ENCODE measurements at regions of chr9 and their contacts with region 1.

Region 1: DNA sequence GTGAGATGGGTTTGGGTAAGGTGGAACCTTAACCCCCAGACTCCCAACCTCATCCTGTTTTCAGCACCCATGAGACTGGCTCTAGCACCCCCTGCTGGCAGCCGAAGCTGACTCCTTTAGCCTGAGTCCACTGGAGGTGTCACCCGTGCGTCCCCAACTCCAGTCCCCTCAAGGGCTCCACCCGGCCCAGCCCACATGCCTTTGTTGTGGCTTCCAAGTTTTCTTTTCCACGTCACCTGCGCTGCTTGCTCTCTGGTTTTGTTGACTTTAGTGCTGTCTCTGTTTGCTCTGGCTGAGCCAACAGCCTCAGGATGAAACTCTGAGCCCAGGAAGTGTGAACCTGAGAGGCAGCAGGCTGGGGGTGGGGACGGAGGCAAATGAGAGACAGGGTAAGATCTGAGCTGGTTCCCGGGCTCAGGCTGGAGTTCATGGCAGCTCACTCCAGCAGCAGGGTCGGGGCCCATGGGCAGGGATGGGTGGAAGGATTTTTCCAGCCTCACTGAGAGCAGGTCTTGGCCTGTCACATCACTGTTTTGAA is 13.2 kb upstream of the AQP7 start:
- DNase-seq: peak; percentile 98
- H3K4me3 Mint-ChIP-seq: no peak overlapping the region
- H3K27ac Mint-ChIP-seq: peak overlapping the region; percentile 89
- H3K4me1 Mint-ChIP-seq: peaks cover 43% of the 10 kb centered on the region
- H3K27me3 Mint-ChIP-seq: no peaks in the 10 kb centered on the region

Region 2: GRCh38 chr9:33320568-33321261 is 94.9 kb before region 1 on chr9:
- CTCF ChIA-PET with region 1: interaction called, 6 read pairs
- intact Hi-C with region 1: loop called (anchors 1 kb)
- DNase-seq: peak; percentile 57
- H3K4me3 Mint-ChIP-seq: no peak overlapping the region
- H3K27ac Mint-ChIP-seq: peak overlapping the region; percentile 85
- H3K4me1 Mint-ChIP-seq: peaks cover 21% of the 10 kb centered on the region
- H3K27me3 Mint-ChIP-seq: no peaks in the 10 kb centered on the region

Region 3: DNA sequence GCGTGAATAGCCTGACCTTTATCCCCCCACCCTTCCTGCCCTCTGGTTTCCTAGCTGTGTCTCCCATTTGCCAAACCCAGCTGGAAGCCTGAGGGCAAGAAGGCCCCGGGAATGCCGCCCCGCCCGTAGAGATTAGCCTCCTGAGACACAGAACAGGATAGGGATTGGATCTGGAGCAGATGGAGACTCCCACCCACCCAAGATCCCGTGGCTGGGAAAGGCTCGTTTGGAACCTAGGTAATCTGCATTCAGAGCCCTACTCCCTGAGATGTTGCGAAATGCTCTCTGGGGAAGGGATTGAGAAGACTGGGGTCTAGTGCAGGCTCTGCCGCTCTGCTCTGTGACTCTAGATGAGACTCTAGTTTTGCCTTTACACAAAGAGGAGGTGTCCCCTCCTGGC is 20.9 kb after region 1 on chr9:
- CTCF ChIA-PET with region 1: interaction called, 19 read pairs
- intact Hi-C with region 1: no loop called
- DNase-seq: no peak
- H3K4me3 Mint-ChIP-seq: no peak overlapping the region
- H3K27ac Mint-ChIP-seq: no peak overlapping the region
- H3K4me1 Mint-ChIP-seq: peaks cover 7% of the 10 kb centered on the region
- H3K27me3 Mint-ChIP-seq: no peaks in the 10 kb centered on the region

Region 4: DNA sequence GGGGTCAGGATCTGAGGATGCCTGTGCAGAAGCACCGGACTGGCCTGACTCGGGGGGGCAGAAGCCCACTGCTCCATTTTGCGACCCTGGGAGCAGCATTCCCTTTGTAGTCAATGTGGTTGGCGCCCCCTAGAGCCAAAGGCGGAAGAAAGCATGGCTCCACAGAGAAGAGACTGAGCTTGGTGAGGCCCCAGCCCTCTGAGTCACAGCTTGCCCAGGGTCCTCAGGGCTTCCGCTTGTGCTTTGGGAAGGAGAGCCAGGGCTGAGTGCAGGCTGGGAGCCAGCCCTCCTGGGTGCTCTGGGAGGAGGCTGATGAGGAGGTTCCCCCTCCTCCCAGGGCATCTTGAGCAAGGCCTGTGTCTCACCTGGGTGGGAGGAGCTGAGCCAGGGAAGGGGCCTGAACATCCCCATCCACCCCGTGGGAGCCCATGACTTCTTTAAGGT is 37.3 kb after region 1 on chr9:
- CTCF ChIA-PET with region 1: interaction called, 100 read pairs
- intact Hi-C with region 1: loop called (anchors 1 kb)
- DNase-seq: peak; percentile 82
- H3K4me3 Mint-ChIP-seq: no peak overlapping the region
- H3K27ac Mint-ChIP-seq: peak overlapping the region; percentile 83
- H3K4me1 Mint-ChIP-seq: peaks cover 72% of the 10 kb centered on the region
- H3K27me3 Mint-ChIP-seq: no peaks in the 10 kb centered on the region

Region 5: DNA sequence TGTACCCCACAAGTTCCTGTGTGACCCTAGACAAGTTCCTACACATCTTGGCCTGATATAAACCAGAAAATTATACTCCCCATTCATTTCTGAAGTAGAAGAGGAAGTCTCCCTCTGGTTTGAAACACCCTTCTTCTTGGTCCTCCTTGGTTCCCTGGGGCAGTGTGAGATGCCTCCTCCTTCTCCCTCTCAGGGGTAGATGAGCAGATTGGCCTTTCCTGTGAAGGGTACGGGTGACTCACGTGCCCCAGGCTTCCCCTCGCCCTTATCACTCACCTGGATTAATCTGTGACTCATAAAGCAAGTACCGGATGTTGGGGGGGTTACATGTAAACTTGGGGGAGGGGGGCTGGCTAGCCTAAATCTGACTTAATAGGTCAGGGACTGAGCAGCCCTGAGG is 42.9 kb after region 1 on chr9:
- CTCF ChIA-PET with region 1: interaction called, 100 read pairs
- intact Hi-C with region 1: loop called (anchors 1 kb)
- DNase-seq: peak; percentile 76
- H3K4me3 Mint-ChIP-seq: no peak overlapping the region
- H3K27ac Mint-ChIP-seq: peak overlapping the region; percentile 90
- H3K4me1 Mint-ChIP-seq: peaks cover 54% of the 10 kb centered on the region
- H3K27me3 Mint-ChIP-seq: no peaks in the 10 kb centered on the region

Region 6: GRCh38 chr9:33466565-33467495 is 51.3 kb after region 1 on chr9:
- CTCF ChIA-PET with region 1: interaction called, 49 read pairs
- intact Hi-C with region 1: no loop called
- DNase-seq: peak; percentile 81
- H3K4me3 Mint-ChIP-seq: no peak overlapping the region
- H3K27ac Mint-ChIP-seq: peak overlapping the region; percentile 24
- H3K4me1 Mint-ChIP-seq: peaks cover 16% of the 10 kb centered on the region
- H3K27me3 Mint-ChIP-seq: no peaks in the 10 kb centered on the region

Measured in activated naive CD4-positive, alpha-beta T cell treated with anti-CD3 and anti-CD28 coated beads for 36 hours (primary cell).